ENCODE measurements at regions of chr20 and their contacts with region 1.

Region 1: DNA sequence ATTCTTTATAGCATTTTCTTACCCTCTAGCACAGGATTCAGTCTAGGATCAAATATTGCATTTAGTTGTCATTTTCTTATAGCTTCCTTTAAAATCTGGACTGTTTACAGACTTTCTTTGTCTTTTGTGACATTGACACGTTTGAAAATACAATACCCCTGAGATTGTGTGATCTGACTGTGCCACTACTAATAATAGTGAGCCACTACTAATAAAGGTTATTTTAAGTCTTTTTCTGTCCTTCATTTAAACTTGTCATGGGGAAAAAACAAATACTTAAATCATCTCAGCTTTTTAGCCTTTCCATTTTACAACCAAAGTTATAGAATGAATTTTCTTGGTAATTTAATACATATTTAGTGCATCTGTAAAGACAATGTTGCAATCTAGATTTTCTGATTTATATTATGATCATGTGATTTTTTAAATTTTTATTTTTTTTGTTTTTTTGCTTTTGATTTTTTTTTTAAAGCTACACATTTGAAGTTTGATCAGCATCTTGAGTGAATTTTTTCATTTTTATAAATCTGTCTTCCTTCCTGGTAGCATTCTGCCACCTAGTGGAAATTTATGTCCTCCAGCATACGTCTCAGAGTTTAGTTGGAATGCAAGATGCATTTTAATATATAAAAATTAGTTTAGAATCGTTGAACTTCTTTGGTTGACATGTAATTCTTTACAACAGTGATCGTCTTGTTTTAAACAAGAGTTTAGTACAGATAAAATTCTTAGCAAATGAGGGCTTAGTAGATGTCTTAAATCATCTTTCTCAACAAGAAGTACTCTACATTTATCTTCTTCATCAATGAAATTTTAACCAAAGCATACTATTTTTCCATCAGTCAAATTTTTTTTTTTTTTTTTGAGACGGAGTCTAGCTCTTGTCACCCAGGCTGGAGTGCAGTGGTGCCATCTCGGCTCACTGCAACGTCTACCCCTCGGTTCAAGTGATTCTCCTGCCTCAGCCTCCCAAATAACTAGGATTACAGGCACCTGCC is 119.4 kb downstream of the NCOA3 start:
- DNase-seq: no peak
- ATAC-seq: peak in 2 of 4 donors; percentile 53 to 60
- H3K4me3 ChIP-seq: no peak overlapping the region
- H3K27ac ChIP-seq: peak overlapping the region in 5 of 12 donors; percentile 3 to 18 (median 8)
- H3K4me1 ChIP-seq: peaks cover 0 to 24% (median 11%) of the 10 kb centered on the region in 12 donors
- H3K27me3 ChIP-seq: no peaks in the 10 kb centered on the region
- CTCF ChIP-seq: peak; percentile 74 to 96 (median 87)
- POLR2A ChIP-seq: no peak

Region 2: DNA sequence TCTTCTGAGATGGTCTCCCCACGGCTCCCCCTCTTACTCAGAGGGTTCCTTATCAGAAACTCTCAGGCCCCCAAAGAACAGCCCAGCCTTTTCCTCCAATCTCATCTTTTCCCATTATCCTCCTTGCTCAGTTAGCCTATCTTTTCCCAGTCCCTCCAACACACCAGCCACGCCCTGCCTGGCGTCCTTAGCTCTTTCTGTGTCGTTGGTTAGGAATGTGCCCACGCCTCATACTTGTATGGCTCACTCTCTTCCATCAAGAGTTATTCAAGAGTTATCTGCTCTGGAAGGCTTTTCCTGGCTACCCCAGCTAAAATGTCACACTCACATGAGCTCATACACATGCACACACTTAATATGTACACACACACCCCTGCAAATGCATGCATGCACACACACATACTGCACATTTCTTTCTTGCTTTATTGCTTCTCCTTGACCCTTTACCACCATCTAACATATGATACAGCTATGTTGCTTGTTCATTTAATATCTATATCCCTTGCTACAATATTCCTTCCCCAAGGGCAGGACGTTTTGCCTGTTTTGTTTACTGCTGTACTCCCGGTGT is 874.1 kb before region 1 on chr20:
- intact Hi-C with region 1: loop called in 6 of 10 experiments (anchors 5 to 10 kb)
- DNase-seq: no peak
- ATAC-seq: peak in 1 of 4 donors; percentile 31
- H3K4me3 ChIP-seq: no peak overlapping the region
- H3K27ac ChIP-seq: no peak overlapping the region
- H3K4me1 ChIP-seq: no peaks in the 10 kb centered on the region
- H3K27me3 ChIP-seq: peaks cover 0 to 41% (median 4%) of the 10 kb centered on the region in 9 donors
- CTCF ChIP-seq: no peak
- POLR2A ChIP-seq: no peak

Region 3: GRCh38 chr20:46757754-46758678 is 863.1 kb before region 1 on chr20:
- intact Hi-C with region 1: loop called in 5 of 10 experiments (anchors 5 to 10 kb)
- DNase-seq: peak in 4 of 5 donors; percentile 10 to 40 (median 38)
- ATAC-seq: peak in 3 of 4 donors; percentile 42 to 54 (median 51)
- H3K4me3 ChIP-seq: no peak overlapping the region
- H3K27ac ChIP-seq: no peak overlapping the region
- H3K4me1 ChIP-seq: peaks cover 0 to under 1% (median 0%) of the 10 kb centered on the region in 12 donors
- H3K27me3 ChIP-seq: peaks cover 0 to 7% (median 0%) of the 10 kb centered on the region in 9 donors
- CTCF ChIP-seq: peak; percentile 82 to 95 (median 90)
- POLR2A ChIP-seq: no peak

Region 4: GRCh38 chr20:47205577-47206498 is 415.3 kb before region 1 on chr20:
- intact Hi-C with region 1: loop called in 3 of 10 experiments (anchors 5 kb)
- DNase-seq: peak; percentile 43 to 84 (median 69)
- ATAC-seq: peak; percentile 40 to 83 (median 76)
- H3K4me3 ChIP-seq: no peak overlapping the region
- H3K27ac ChIP-seq: no peak overlapping the region
- H3K4me1 ChIP-seq: peaks cover 0 to 9% (median 3%) of the 10 kb centered on the region in 12 donors
- H3K27me3 ChIP-seq: no peaks in the 10 kb centered on the region
- CTCF ChIP-seq: peak; percentile 22 to 83 (median 58)
- POLR2A ChIP-seq: no peak

Region 5: GRCh38 chr20:47392015-47392720 is 228.9 kb before region 1 on chr20:
- intact Hi-C with region 1: loop called in 3 of 10 experiments (anchors 5 kb)
- DNase-seq: peak in 1 of 5 donors; percentile 62
- ATAC-seq: peak in 3 of 4 donors; percentile 64 to 88 (median 86)
- H3K4me3 ChIP-seq: no peak overlapping the region
- H3K27ac ChIP-seq: peak overlapping the region in 3 of 12 donors; percentile 27 to 65 (median 62)
- H3K4me1 ChIP-seq: peaks cover 0 to 13% (median 0%) of the 10 kb centered on the region in 12 donors
- H3K27me3 ChIP-seq: no peaks in the 10 kb centered on the region
- CTCF ChIP-seq: no peak
- POLR2A ChIP-seq: no peak

Region 6: GRCh38 chr20:47501483-47502270 is 119.4 kb before region 1 on chr20 and contains the start of gene NCOA3:
- intact Hi-C with region 1: loop called in 8 of 10 experiments (anchors 2 to 10 kb)
- DNase-seq: peak; percentile 96 to 99 (median 98)
- ATAC-seq: peak; percentile 96 to 99 (median 99)
- H3K4me3 ChIP-seq: peak within 1 kb of the TSS; percentile 76 to 99 (median 92)
- H3K27ac ChIP-seq: peak within 1 kb of the TSS; percentile 91 to 98 (median 95)
- H3K4me1 ChIP-seq: peaks cover 0 to 46% (median 23%) of the 10 kb centered on the region in 12 donors
- H3K27me3 ChIP-seq: no peaks in the 10 kb centered on the region
- CTCF ChIP-seq: peak; percentile 41 to 68 (median 50)
- POLR2A ChIP-seq: peak; percentile 24 to 98
- total RNA-seq, gene NCOA3: 19.4 to 39.3 (median 26.6) TPM

Measured in heart left ventricle (tissue), 16 donors.